AG04450 (cell line): ENCODE measurements at regions of chr6 and their contacts with region 1.

Region 1: DNA sequence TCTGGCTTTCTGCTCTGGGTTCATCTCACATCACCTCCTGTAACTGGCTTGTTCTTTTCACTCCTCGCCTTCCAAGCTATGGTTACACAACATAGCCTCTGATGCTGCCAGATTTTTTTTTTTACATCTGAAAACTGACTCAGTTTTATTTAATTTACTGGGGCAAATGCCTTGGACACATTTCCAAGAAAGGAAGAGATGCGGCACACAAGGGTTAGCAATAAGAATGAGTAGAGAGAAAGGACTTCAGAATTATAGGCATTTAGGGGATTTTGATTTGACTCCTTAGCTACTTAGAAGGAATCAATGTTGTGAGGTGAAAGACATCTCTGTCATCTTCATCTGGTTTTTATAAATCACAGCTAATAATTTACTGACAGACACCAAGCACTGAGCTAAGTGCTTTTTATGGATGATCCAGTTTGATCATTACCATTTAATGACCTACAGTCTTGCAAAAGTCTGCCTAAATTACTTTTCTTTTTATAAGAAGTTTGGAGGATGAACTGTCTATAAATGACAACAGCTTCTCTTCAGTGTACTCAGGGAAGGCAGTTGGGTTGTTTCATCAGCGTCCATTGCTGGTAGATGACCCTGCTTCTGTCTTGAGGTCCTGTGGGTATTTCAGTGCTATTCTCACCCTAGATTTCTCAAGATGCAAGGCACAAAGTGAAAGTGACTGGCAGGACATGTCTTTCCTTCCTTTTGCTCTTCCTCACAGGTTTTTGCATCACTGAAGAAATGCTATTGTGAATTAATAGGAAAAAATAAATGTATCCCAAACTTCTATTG is 31.1 kb downstream of the LAMA4 start:
- DNase-seq: peak; percentile 86
- H3K4me3 ChIP-seq: no peak overlapping the region
- H3K27ac ChIP-seq: peak overlapping the region; percentile 85
- H3K27me3 ChIP-seq: no peaks in the 10 kb centered on the region
- CTCF ChIP-seq: no peak

Region 2: DNA sequence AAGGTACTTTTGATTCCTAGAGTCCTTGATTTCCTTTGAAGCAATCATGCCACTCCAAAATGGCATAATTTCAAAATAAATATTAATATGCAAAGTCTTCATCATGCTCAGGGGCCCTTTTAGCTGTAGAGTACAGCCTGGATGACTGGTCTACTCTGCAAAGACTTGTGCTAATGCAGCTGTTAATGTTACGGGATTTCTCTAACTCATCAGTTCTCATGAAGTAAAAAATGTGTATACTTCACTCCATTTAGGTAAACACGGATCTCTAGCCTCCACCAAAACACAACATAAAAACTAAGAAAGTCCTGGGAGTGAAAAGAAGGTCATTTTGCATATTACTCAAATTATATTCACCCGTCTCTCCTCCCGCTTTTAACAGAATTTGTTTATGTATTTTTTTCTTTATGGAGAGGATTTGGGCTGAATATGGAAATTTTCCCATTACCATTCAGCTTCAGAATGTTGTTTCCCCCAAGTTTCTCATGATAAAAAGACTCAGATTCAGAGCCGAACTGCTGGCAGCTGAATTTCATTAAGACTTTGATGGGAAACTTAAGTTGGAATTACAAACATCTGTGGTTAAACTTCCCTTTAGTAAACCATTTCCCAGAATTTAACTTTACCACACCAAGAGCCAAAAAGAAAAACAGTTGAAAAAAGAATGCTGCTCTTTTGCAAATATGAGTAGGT is 22.4 kb after region 1 on chr6:
- CTCF ChIA-PET with region 1: no interaction called
- POLR2A ChIA-PET with region 1: interaction called, 20 read pairs
- DNase-seq: peak; percentile 87
- H3K4me3 ChIP-seq: no peak overlapping the region
- H3K27ac ChIP-seq: peak overlapping the region; percentile 92
- H3K27me3 ChIP-seq: no peaks in the 10 kb centered on the region
- CTCF ChIP-seq: no peak